B cell (primary cell): ENCODE measurements at regions of chr22 and their contacts with region 1.

Region 1: GRCh38 chr22:22959147-22959827 is 71.7 kb downstream of the IGLL5 start:
- DNase-seq: peak; percentile 90
- ATAC-seq: peak; percentile 52
- H3K4me3 ChIP-seq: no peak overlapping the region
- H3K4me3 Mint-ChIP-seq: no peak overlapping the region
- H3K27ac ChIP-seq: no peak overlapping the region
- H3K27ac Mint-ChIP-seq: peak overlapping the region; percentile 43
- H3K4me1 ChIP-seq: peaks cover 11 to 18% of the 10 kb centered on the region in 2 donors
- H3K4me1 Mint-ChIP-seq: peaks cover 15% of the 10 kb centered on the region
- H3K27me3 ChIP-seq: no peaks in the 10 kb centered on the region
- H3K27me3 Mint-ChIP-seq: no peaks in the 10 kb centered on the region
- CTCF ChIP-seq: peak; percentile 95

Region 2: DNA sequence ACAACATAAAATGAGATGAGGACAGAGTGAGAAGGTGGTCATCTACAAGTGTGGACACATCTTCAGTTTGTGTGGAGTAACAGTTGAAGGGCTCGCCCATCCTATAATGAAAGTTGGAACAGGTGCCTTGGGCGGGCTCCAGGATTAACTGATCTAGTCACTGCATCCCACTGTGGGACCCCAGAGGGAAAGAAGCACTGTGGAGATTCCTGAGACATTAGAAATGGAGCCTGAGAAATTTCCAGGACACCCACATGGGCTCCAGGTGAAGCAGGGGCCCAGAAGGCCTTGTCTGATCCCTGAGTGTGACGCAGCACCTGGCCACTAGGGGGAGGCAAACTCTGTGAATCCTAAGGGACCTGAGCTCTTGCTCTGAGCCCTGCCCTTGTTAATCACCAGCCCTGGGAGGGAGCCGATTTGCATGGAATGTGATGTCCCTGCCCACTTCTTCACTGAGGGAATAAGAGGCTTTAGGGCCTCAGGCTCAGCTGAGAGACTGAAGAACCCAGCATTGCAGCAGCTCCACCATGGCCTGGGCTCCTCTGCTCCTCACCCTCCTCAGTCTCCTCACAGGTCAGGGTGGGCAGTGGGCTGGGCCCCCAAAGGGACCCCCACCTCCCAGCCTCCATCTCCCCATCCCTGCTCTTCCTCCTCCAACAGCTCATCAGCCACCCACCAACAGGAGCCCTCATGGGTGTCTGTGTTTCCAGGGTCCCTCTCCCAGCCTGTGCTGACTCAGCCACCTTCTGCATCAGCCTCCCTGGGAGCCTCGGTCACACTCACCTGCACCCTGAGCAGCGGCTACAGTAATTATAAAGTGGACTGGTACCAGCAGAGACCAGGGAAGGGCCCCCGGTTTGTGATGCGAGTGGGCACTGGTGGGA is 616.3 kb before region 1 on chr22:
- CTCF ChIA-PET with region 1: interaction called, 10 read pairs
- POLR2A ChIA-PET with region 1: no interaction called
- intact Hi-C with region 1: no loop called
- DNase-seq: peak; percentile 75
- ATAC-seq: peak; percentile 53
- H3K4me3 ChIP-seq: no peak overlapping the region
- H3K4me3 Mint-ChIP-seq: peak overlapping the region; percentile 68
- H3K27ac ChIP-seq: peak overlapping the region; percentile 32 to 39
- H3K27ac Mint-ChIP-seq: peak overlapping the region; percentile 78
- H3K4me1 ChIP-seq: peaks cover 22 to 26% of the 10 kb centered on the region in 2 donors
- H3K4me1 Mint-ChIP-seq: peaks cover 27% of the 10 kb centered on the region
- H3K27me3 ChIP-seq: no peaks in the 10 kb centered on the region
- H3K27me3 Mint-ChIP-seq: no peaks in the 10 kb centered on the region
- CTCF ChIP-seq: peak; percentile 96

Region 3: GRCh38 chr22:22687638-22688500 is 271.4 kb before region 1 on chr22:
- CTCF ChIA-PET with region 1: interaction called, 39 read pairs
- POLR2A ChIA-PET with region 1: interaction called, 3 read pairs
- intact Hi-C with region 1: no loop called
- DNase-seq: peak; percentile 36
- ATAC-seq: no peak
- H3K4me3 ChIP-seq: no peak overlapping the region
- H3K4me3 Mint-ChIP-seq: peak overlapping the region; percentile 78
- H3K27ac ChIP-seq: peak overlapping the region; percentile 11 to 52
- H3K27ac Mint-ChIP-seq: peak overlapping the region; percentile 81
- H3K4me1 ChIP-seq: peaks cover 46 to 56% of the 10 kb centered on the region in 2 donors
- H3K4me1 Mint-ChIP-seq: peaks cover 54% of the 10 kb centered on the region
- H3K27me3 ChIP-seq: no peaks in the 10 kb centered on the region
- H3K27me3 Mint-ChIP-seq: no peaks in the 10 kb centered on the region
- CTCF ChIP-seq: peak; percentile 47

Region 4: GRCh38 chr22:22770280-22770871 is 188.9 kb before region 1 on chr22:
- CTCF ChIA-PET with region 1: interaction called, 54 read pairs
- POLR2A ChIA-PET with region 1: no interaction called
- intact Hi-C with region 1: no loop called
- DNase-seq: peak; percentile 60
- ATAC-seq: no peak
- H3K4me3 ChIP-seq: no peak overlapping the region
- H3K4me3 Mint-ChIP-seq: no peak overlapping the region
- H3K27ac ChIP-seq: no peak overlapping the region
- H3K27ac Mint-ChIP-seq: peak overlapping the region; percentile 47
- H3K4me1 ChIP-seq: peaks cover 22 to 39% of the 10 kb centered on the region in 2 donors
- H3K4me1 Mint-ChIP-seq: peaks cover 32% of the 10 kb centered on the region
- H3K27me3 ChIP-seq: peaks cover 0 to 10% (median 3%) of the 10 kb centered on the region in 4 experiments
- H3K27me3 Mint-ChIP-seq: peaks cover 28% of the 10 kb centered on the region
- CTCF ChIP-seq: peak; percentile 67

Region 5: GRCh38 chr22:22884010-22884887 is 75.0 kb before region 1 on chr22:
- CTCF ChIA-PET with region 1: interaction called, 148 read pairs
- POLR2A ChIA-PET with region 1: interaction called, 3 read pairs
- intact Hi-C with region 1: loop called (anchors 1 kb)
- DNase-seq: peak; percentile 86
- ATAC-seq: peak; percentile 59
- H3K4me3 ChIP-seq: peak overlapping the region in 2 of 5 experiments; percentile 11 to 44
- H3K4me3 Mint-ChIP-seq: peak overlapping the region; percentile 74
- H3K27ac ChIP-seq: peak overlapping the region; percentile 38 to 56
- H3K27ac Mint-ChIP-seq: peak overlapping the region; percentile 81
- H3K4me1 ChIP-seq: peaks cover 83 to 95% of the 10 kb centered on the region in 2 donors
- H3K4me1 Mint-ChIP-seq: peaks cover 94% of the 10 kb centered on the region
- H3K27me3 ChIP-seq: peaks cover 0 to 10% (median 3%) of the 10 kb centered on the region in 4 experiments
- H3K27me3 Mint-ChIP-seq: peaks cover 10% of the 10 kb centered on the region
- CTCF ChIP-seq: peak; percentile 77

Region 6: GRCh38 chr22:23054531-23055257 is 95.4 kb after region 1 on chr22:
- CTCF ChIA-PET with region 1: no interaction called
- POLR2A ChIA-PET with region 1: no interaction called
- intact Hi-C with region 1: no loop called
- DNase-seq: no peak
- ATAC-seq: peak; percentile 83
- H3K4me3 ChIP-seq: no peak overlapping the region
- H3K4me3 Mint-ChIP-seq: peak overlapping the region; percentile 64
- H3K27ac ChIP-seq: no peak overlapping the region
- H3K27ac Mint-ChIP-seq: peak overlapping the region; percentile 90
- H3K4me1 ChIP-seq: peaks cover 16 to 27% of the 10 kb centered on the region in 2 donors
- H3K4me1 Mint-ChIP-seq: peaks cover 36% of the 10 kb centered on the region
- H3K27me3 ChIP-seq: no peaks in the 10 kb centered on the region
- H3K27me3 Mint-ChIP-seq: no peaks in the 10 kb centered on the region
- CTCF ChIP-seq: no peak

Region 7: GRCh38 chr22:23113067-23113846 is 154.0 kb after region 1 on chr22:
- CTCF ChIA-PET with region 1: interaction called, 10 read pairs
- POLR2A ChIA-PET with region 1: no interaction called
- intact Hi-C with region 1: no loop called
- DNase-seq: no peak
- ATAC-seq: peak; percentile 28
- H3K4me3 ChIP-seq: no peak overlapping the region
- H3K4me3 Mint-ChIP-seq: no peak overlapping the region
- H3K27ac ChIP-seq: no peak overlapping the region
- H3K27ac Mint-ChIP-seq: no peak overlapping the region
- H3K4me1 ChIP-seq: no peaks in the 10 kb centered on the region
- H3K4me1 Mint-ChIP-seq: peaks cover 3% of the 10 kb centered on the region
- H3K27me3 ChIP-seq: no peaks in the 10 kb centered on the region
- H3K27me3 Mint-ChIP-seq: no peaks in the 10 kb centered on the region
- CTCF ChIP-seq: no peak